ENCODE measurements at regions of chr1 and their contacts with region 1.

Region 1: GRCh38 chr1:160428655-160429054 is 28.3 kb downstream of the VANGL2 start:
- DNase-seq: peak; percentile 37 to 50
- ATAC-seq: peak in 7 of 8 donors; percentile 62 to 83 (median 79)
- H3K4me3 ChIP-seq: no peak overlapping the region
- H3K27ac ChIP-seq: peak overlapping the region in 4 of 10 donors; percentile 17 to 78 (median 36)
- H3K4me1 ChIP-seq: peaks cover 0 to 35% (median 9%) of the 10 kb centered on the region in 9 donors
- H3K27me3 ChIP-seq: no peaks in the 10 kb centered on the region
- CTCF ChIP-seq: peak in 8 of 9 donors; percentile 31 to 72 (median 64)

Region 2: DNA sequence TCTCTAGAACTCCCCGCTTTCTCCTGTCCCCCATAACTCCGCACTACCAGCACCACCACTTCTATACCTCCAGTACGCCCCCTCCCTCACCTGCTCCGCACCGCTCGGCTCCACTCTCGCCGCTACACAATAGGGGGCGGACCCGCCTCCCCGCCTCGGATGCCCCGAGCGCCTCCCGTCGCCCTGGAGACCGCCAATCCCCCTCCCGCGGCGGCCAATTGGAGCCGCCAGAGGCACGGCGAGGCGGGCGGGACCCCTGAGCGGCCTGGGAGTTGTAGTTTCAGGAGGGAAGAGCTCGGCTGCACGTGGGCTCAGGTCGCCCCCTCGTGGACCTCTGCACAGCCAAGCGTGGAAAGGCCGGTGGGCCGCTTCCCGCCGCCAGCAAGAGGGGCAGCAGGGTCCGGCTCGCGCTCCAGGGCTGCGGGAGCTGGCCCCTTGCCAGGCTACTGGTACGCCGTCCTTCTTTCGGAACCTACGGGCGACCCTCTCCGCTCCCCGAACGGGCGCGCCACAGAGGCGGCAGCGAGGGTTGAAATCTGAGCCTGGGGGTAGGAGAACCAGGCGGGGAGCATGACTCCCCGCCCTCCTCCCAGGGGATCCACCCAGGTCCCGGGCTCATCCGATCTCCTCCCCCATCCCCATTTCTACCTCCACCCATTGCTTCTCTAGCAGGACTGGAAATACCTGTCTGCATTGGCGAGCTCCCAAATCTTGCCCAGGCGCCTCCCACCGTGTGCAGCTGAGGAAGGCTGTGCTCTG is 483.0 kb before region 1 on chr1 and contains the start of gene IGSF9:
- intact Hi-C with region 1: no loop called
- DNase-seq: peak; percentile 85 to 88
- ATAC-seq: peak; percentile 93 to 98 (median 96)
- H3K4me3 ChIP-seq: peak within 1 kb of the TSS in 9 of 10 donors; percentile 35 to 53 (median 43)
- H3K27ac ChIP-seq: no peak within 1 kb of the TSS
- H3K4me1 ChIP-seq: peaks cover 0 to 15% (median 12%) of the 10 kb centered on the region in 9 donors
- H3K27me3 ChIP-seq: peaks cover 0 to 30% (median 18%) of the 10 kb centered on the region in 7 donors
- CTCF ChIP-seq: peak; percentile 42 to 90 (median 73)
- total RNA-seq, gene IGSF9: 0.07 to 0.15 (median 0.08) TPM in 3 of 10 donors, not detected in the others

Region 3: GRCh38 chr1:160558660-160559380 is 130.2 kb after region 1 on chr1:
- intact Hi-C with region 1: no loop called
- DNase-seq: no peak
- ATAC-seq: no peak
- H3K4me3 ChIP-seq: peak overlapping the region in 1 of 10 donors; percentile 20
- H3K27ac ChIP-seq: peak overlapping the region in 1 of 10 donors; percentile 70
- H3K4me1 ChIP-seq: peaks cover 0 to 42% (median 0%) of the 10 kb centered on the region in 9 donors
- H3K27me3 ChIP-seq: peaks cover 0 to 35% (median 0%) of the 10 kb centered on the region in 7 donors
- CTCF ChIP-seq: no peak

Region 4: GRCh38 chr1:160607011-160607671 is 178.5 kb after region 1 on chr1:
- intact Hi-C with region 1: loop called (anchors 1 to 5 kb)
- DNase-seq: peak in 1 of 2 donors; percentile 36
- ATAC-seq: peak; percentile 69 to 92 (median 87)
- H3K4me3 ChIP-seq: no peak overlapping the region
- H3K27ac ChIP-seq: peak overlapping the region in 1 of 10 donors; percentile 39
- H3K4me1 ChIP-seq: peaks cover 0 to 12% (median 0%) of the 10 kb centered on the region in 9 donors
- H3K27me3 ChIP-seq: peaks cover 0 to 21% (median 4%) of the 10 kb centered on the region in 7 donors
- CTCF ChIP-seq: peak; percentile 41 to 77 (median 66)

Region 5: DNA sequence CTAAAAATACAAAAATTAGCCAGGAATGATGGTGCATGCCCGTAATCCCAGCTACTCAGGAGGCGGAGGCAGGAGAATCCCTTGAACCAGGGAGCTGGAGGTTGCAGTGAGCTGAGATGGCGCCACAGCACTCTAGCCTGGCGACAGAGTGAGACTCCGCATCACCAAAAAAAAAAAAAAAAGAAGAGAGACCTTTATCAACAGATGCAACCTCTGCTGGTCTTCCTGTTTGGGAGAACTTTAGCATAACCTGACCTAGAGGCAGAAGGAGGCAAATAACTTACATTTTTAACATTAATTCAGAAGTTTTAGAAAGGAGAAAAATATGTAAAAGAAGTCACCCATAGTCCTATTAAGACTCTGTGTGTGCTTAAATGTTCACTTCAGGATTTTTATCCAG is 185.8 kb after region 1 on chr1:
- intact Hi-C with region 1: loop called in 4 of 10 experiments (anchors 2 to 5 kb)
- DNase-seq: no peak
- ATAC-seq: no peak
- H3K4me3 ChIP-seq: no peak overlapping the region
- H3K27ac ChIP-seq: no peak overlapping the region
- H3K4me1 ChIP-seq: peaks cover 0 to 9% (median 0%) of the 10 kb centered on the region in 9 donors
- H3K27me3 ChIP-seq: peaks cover 0 to 33% (median 0%) of the 10 kb centered on the region in 7 donors
- CTCF ChIP-seq: no peak